ENCODE measurements at regions of chr3 and their contacts with region 1.

Region 1: GRCh38 chr3:40452876-40453730 is 4.0 kb upstream of the RPL14 start:
- DNase-seq: peak; percentile 98
- ATAC-seq: peak; percentile 95
- H3K4me3 ChIP-seq: peak overlapping the region; percentile 65 to 86 (median 79)
- H3K27ac ChIP-seq: peak overlapping the region; percentile 86
- H3K4me1 ChIP-seq: peaks cover 41% of the 10 kb centered on the region
- H3K27me3 ChIP-seq: no peaks in the 10 kb centered on the region; a peak in 1 of 5 replicates
- CTCF ChIP-seq: peak; percentile 52
- EP300 ChIP-seq: peak in 1 of 2 experiments; percentile 68; a peak in 2 of 4 replicates
- POLR2A ChIP-seq: peak; percentile 81 to 82
- RAD21 ChIP-seq: no peak; the same call in none of the 2 replicates

Region 2: GRCh38 chr3:40309925-40310695 is 143.0 kb before region 1 on chr3:
- CTCF ChIA-PET with region 1: no interaction called
- POLR2A ChIA-PET with region 1: interaction called, 6 read pairs
- in situ Hi-C with region 1: loop called (anchors 10 kb)
- intact Hi-C with region 1: loop called (anchors 1 kb)
- DNase-seq: peak; percentile 35
- ATAC-seq: peak; percentile 68
- H3K4me3 ChIP-seq: peak overlapping the region; percentile 88 to 94 (median 93)
- H3K27ac ChIP-seq: peak overlapping the region; percentile 96
- H3K4me1 ChIP-seq: peaks cover 44% of the 10 kb centered on the region
- H3K27me3 ChIP-seq: no peaks in the 10 kb centered on the region
- CTCF ChIP-seq: no peak; the same call in 1 of the 2 replicates
- EP300 ChIP-seq: no peak
- POLR2A ChIP-seq: no peak
- RAD21 ChIP-seq: no peak

Region 3: GRCh38 chr3:40329071-40329470 is 124.0 kb before region 1 on chr3:
- CTCF ChIA-PET with region 1: no interaction called
- POLR2A ChIA-PET with region 1: interaction called, 5 read pairs
- in situ Hi-C with region 1: no loop called
- intact Hi-C with region 1: loop called (anchors 2 kb)
- DNase-seq: no peak
- ATAC-seq: peak; percentile 47; the same call in 1 of the 3 replicates
- H3K4me3 ChIP-seq: no peak overlapping the region
- H3K27ac ChIP-seq: no peak overlapping the region
- H3K4me1 ChIP-seq: peaks cover 10% of the 10 kb centered on the region; the same call in 1 of the 2 replicates
- H3K27me3 ChIP-seq: no peaks in the 10 kb centered on the region; a peak in 2 of 5 replicates
- CTCF ChIP-seq: no peak
- EP300 ChIP-seq: no peak
- POLR2A ChIP-seq: no peak
- RAD21 ChIP-seq: no peak

Region 4: DNA sequence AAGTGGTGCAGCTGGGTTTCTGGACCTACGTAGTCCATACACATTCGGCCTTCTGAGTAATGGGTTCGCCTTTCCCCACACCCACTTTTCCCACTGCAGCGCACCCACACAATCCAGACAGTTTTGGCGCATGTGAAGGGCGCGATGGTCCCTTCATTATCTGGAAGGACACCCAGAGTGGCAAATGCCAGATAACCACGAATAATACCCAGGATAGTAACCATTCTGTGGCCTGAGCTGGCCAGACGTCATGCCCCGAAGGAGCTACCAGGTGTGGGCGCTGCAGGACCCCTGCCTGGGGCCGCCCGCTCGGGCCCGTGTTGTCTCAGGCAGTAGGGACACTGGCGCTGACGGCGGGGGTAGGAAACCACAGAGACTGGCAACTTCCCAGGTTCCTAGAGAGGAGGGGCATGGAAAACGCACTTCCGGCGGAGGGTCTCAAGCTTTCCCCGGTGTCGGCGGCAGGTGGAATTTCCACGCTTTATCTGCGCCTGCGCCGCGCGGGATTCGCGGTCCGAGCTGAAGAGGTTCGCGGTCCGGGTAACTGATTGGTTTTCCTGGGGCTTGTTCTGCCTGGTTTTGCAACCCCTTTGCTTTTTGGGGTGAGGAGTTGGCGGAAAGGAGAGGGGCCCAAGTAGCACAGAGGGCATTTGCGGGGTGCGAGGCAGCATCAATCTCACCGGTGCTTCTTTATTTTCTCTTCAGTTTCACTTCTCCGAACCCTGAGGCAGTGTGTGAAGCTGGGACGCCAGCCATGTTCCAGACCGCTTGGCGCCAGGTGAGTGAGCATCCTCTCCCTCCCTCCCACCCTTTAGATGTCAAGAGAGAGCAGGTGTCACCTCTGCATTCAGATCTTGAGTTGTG is 52.7 kb after region 1 on chr3 and contains the start of gene ZNF620:
- CTCF ChIA-PET with region 1: no interaction called
- POLR2A ChIA-PET with region 1: interaction called, 37 read pairs
- in situ Hi-C with region 1: no loop called
- intact Hi-C with region 1: loop called (anchors 5 kb)
- DNase-seq: peak; percentile 92
- ATAC-seq: peak; percentile 98
- H3K4me3 ChIP-seq: peak within 1 kb of the TSS; percentile 75 to 86 (median 76)
- H3K27ac ChIP-seq: peak within 1 kb of the TSS; percentile 91
- H3K4me1 ChIP-seq: peaks cover 23% of the 10 kb centered on the region
- H3K27me3 ChIP-seq: no peaks in the 10 kb centered on the region; a peak in 1 of 5 replicates
- CTCF ChIP-seq: peak; percentile 80
- EP300 ChIP-seq: no peak; a peak in 1 of 4 replicates
- POLR2A ChIP-seq: peak; percentile 74 to 78
- RAD21 ChIP-seq: peak; percentile 82
- total RNA-seq, gene ZNF620: 12.2 and 16.3 TPM in 2 replicates

Region 5: DNA sequence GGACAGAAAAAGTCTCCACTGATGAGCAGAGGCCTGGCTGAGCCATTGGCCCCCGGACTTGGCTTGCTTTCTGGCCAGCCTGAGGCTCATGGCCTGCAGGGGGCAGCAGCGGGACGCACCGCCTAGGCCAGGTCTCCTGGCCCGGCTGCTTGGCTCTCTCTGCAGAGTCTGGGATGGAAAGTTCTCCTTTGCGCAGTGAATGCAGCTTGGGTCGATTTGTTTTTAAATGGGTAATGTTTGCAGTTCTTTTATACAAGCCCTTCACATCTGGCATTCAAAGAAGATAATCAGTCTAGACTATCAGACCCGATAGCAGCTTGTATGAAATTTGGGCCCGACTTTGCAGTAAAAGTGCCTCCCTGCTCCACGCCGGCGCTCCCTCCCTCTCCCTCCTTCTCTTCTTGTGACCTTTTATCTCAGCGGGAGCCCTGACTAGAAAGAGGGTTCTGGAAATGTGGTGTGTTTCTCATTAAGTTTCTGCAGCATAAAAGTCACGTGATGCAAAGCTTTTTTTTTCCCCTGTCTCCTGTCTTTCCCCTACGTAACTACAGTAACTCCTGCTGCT is 131.6 kb after region 1 on chr3:
- CTCF ChIA-PET with region 1: no interaction called
- POLR2A ChIA-PET with region 1: no interaction called
- in situ Hi-C with region 1: no loop called
- intact Hi-C with region 1: no loop called
- DNase-seq: peak; percentile 50
- ATAC-seq: peak; percentile 94
- H3K4me3 ChIP-seq: no peak overlapping the region
- H3K27ac ChIP-seq: no peak overlapping the region
- H3K4me1 ChIP-seq: peaks cover 12% of the 10 kb centered on the region; the same call in 1 of the 2 replicates
- H3K27me3 ChIP-seq: peaks cover 2 to 4% of the 10 kb centered on the region in 2 experiments; a peak in 1 of 5 replicates
- CTCF ChIP-seq: peak; percentile 96
- EP300 ChIP-seq: no peak
- POLR2A ChIP-seq: no peak
- RAD21 ChIP-seq: peak; percentile 87

Region 6: GRCh38 chr3:41035456-41036022 is 582.4 kb after region 1 on chr3:
- CTCF ChIA-PET with region 1: no interaction called
- POLR2A ChIA-PET with region 1: no interaction called
- in situ Hi-C with region 1: no loop called
- intact Hi-C with region 1: no loop called
- DNase-seq: no peak
- ATAC-seq: no peak
- H3K4me3 ChIP-seq: no peak overlapping the region
- H3K27ac ChIP-seq: no peak overlapping the region
- H3K4me1 ChIP-seq: peaks cover 8% of the 10 kb centered on the region
- H3K27me3 ChIP-seq: 0 out of 5 replicates have a peak, but pooled peaks cover 0 to 4% of the 10 kb centered on the region in 2 experiments
- CTCF ChIP-seq: no peak
- EP300 ChIP-seq: no peak
- POLR2A ChIP-seq: no peak
- RAD21 ChIP-seq: no peak

Region 7: GRCh38 chr3:41102053-41102556 is 649.0 kb after region 1 on chr3:
- CTCF ChIA-PET with region 1: no interaction called
- POLR2A ChIA-PET with region 1: no interaction called
- in situ Hi-C with region 1: no loop called
- intact Hi-C with region 1: loop called (anchors 10 kb)
- DNase-seq: peak; percentile 74
- ATAC-seq: peak; percentile 98
- H3K4me3 ChIP-seq: no peak overlapping the region
- H3K27ac ChIP-seq: no peak overlapping the region
- H3K4me1 ChIP-seq: peaks cover 38% of the 10 kb centered on the region
- H3K27me3 ChIP-seq: peaks cover 0 to 4% of the 10 kb centered on the region in 2 experiments; a peak in 1 of 5 replicates
- CTCF ChIP-seq: no peak
- EP300 ChIP-seq: peak in 1 of 2 experiments; percentile 44; a peak in 2 of 4 replicates
- POLR2A ChIP-seq: no peak
- RAD21 ChIP-seq: no peak

Measured in HepG2 (cell line).